ENCODE measurements at regions of chr1 and their contacts with region 1.

Region 1: DNA sequence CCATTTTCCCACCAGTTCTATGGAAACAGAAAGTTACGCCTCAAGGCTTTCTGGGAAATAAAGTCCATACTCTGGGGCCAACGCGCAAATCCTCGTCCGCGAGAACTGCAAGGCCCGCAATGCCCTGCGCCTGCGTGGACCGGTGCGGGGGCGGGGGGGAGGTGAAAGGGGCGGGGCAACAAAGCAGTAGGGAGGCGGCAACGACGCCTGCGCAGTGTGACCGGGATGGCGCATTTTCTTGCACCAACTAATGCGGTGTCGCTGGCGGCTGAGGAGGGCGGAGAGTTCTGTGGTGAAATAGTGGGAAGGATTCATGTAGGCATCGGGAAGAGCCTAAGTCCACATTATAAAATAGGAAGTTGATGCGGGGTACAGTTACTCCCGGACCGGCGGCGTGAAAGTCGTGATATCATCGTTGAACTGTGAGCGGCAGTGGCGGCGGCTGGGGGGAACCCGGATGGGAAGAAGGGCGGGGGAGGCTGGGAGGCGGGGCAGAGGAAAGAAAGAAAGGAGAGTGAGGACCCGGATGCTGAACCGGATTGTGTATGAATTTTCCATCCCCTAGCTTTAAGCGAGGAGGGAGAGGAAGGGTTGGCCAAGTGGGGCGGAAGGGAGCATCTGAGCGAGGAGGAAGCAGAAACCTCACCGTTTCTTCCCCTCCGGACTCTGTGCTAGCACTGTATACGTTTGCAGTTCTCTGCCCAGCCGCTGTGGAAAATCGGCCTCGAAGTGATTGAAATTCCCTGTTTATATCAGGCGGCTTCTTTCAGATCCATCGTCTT is at the start of gene GGPS1:
- DNase-seq: peak; percentile 94 to 98 (median 96)
- H3K4me3 ChIP-seq: peak within 1 kb of the TSS; percentile 73 to 100 (median 95)
- H3K27ac ChIP-seq: peak within 1 kb of the TSS; percentile 89 to 100 (median 98)
- H3K27me3 ChIP-seq: no peaks in the 10 kb centered on the region
- CTCF ChIP-seq: peak in 38 of 56 donors; percentile 5 to 52 (median 28)
- total RNA-seq, gene GGPS1: 28.5 to 60.2 (median 43.4) TPM

Region 2: DNA sequence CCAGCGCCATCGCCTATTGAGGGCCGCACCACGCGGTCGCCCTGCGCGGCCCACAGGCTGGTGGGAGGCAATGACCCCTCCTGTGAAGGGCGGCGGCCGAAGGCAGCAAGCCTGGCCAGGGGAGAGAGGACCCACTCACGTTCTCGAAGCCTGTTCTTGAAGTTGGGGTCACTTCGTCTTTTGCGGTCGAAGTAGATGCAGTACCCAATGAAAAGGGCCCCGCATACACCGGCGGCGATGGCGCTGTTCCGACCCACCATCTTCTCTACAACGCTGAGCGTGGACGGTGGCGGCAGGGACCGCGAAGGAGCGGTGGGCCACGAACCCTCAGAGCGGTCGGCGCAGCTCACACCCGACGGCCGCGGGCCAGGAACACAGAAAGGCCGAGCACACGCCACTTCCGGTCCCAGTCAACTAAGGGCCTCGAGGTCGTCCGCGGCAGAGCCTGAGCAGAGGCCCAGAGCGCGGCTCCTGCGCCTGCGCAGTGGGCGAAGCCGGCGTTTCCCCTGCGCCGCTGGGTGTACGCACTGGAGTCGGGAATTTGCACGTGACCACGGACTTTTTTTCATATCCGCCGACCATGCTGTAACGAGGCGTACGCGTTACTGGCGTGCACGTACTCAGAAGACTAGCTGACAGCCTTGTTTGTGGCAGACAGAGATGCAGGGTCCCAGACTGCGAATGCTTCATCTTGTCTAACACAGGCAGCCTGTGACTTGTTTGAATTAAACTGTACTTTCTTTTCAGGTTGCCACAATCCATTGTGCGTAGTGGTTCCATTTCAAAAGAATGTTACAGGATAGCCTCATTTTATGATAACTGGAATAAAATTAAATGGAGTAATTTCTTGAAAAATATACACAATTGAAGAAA is 199.9 kb before region 1 on chr1 and contains the start of gene TOMM20:
- intact Hi-C with region 1: loop called (anchors 2 kb)
- DNase-seq: peak; percentile 93 to 97 (median 95)
- H3K4me3 ChIP-seq: peak within 1 kb of the TSS; percentile 67 to 100 (median 93)
- H3K27ac ChIP-seq: peak within 1 kb of the TSS; percentile 42 to 94 (median 89)
- H3K27me3 ChIP-seq: no peaks in the 10 kb centered on the region
- CTCF ChIP-seq: peak in 49 of 56 donors; percentile 3 to 63 (median 38)
- total RNA-seq, gene TOMM20: 96.2 to 291 (median 209) TPM

Region 3: DNA sequence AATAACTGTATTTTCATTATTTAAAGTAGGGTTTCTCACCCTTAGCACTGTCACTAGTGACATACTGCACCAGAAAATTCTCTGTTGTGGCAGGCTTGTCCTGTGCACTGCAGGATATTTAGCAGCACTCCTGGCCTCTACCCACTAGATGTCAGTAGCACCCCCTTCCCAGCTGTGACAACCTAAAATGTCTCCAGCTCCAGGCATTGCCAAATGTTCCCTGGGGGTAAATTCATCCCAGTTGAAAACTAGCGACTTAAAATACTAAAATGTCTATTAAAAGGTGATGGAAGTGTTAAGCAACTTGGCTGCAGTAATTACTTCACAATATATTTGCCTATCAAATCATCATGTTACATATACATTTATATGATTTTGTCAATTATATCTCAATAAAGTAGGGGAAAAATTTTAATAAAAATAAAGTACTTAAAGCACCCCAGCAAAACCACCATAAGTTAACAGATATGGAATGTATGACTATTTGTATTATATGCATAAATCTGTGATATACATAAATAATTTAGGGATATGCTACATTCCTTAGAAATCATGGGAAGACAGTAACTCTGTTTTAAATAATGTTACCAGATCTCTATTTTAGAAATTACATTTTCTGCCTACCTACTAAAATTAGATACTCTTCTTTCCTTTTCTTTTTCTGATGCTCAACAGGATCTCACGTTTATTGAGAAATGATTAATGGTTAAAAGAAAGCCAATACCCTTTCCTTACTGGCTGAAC is 75.2 kb before region 1 on chr1:
- intact Hi-C with region 1: loop called (anchors 2 to 5 kb)
- DNase-seq: peak in 7 of 10 donors; percentile 32 to 73 (median 64)
- H3K4me3 ChIP-seq: peak overlapping the region in 1 of 59 donors; percentile 2
- H3K27ac ChIP-seq: peak overlapping the region in 23 of 59 donors; percentile 0 to 67 (median 28)
- H3K27me3 ChIP-seq: no peaks in the 10 kb centered on the region
- CTCF ChIP-seq: peak; percentile 35 to 91 (median 79)

Region 4: GRCh38 chr1:235415008-235415904 is 86.7 kb after region 1 on chr1:
- intact Hi-C with region 1: loop called (anchors 2 to 5 kb)
- DNase-seq: peak in 8 of 10 donors; percentile 20 to 60 (median 50)
- H3K4me3 ChIP-seq: no peak overlapping the region
- H3K27ac ChIP-seq: peak overlapping the region in 28 of 59 donors; percentile 2 to 66 (median 44)
- H3K27me3 ChIP-seq: no peaks in the 10 kb centered on the region
- CTCF ChIP-seq: peak; percentile 56 to 89 (median 76)

Region 5: GRCh38 chr1:236281654-236282424 is 953.3 kb after region 1 on chr1 and contains the start of gene ERO1B:
- intact Hi-C with region 1: loop called in 1 of 2 experiments (anchors 5 kb)
- DNase-seq: peak; percentile 94 to 100 (median 97)
- H3K4me3 ChIP-seq: peak within 1 kb of the TSS; percentile 66 to 99 (median 93)
- H3K27ac ChIP-seq: peak within 1 kb of the TSS in 50 of 59 donors; percentile 7 to 89 (median 70)
- H3K27me3 ChIP-seq: no peaks in the 10 kb centered on the region
- CTCF ChIP-seq: peak in 49 of 56 donors; percentile 5 to 66 (median 44)
- total RNA-seq, gene ERO1B: 8.1 to 22.9 (median 11.5) TPM